K562 (cell line): ENCODE measurements at regions of chr7 and their contacts with region 1.

Region 1: GRCh38 chr7:115889354-115889984 is 141.1 kb downstream of the TFEC start:
- DNase-seq: no peak
- ATAC-seq: no peak
- H3K4me3 ChIP-seq: no peak overlapping the region
- H3K27ac ChIP-seq: no peak overlapping the region
- H3K4me1 ChIP-seq: no peaks in the 10 kb centered on the region
- H3K27me3 ChIP-seq: no peaks in the 10 kb centered on the region
- CTCF ChIP-seq: no peak
- EP300 ChIP-seq: no peak
- POLR2A ChIP-seq: no peak
- RAD21 ChIP-seq: no peak

Region 2: DNA sequence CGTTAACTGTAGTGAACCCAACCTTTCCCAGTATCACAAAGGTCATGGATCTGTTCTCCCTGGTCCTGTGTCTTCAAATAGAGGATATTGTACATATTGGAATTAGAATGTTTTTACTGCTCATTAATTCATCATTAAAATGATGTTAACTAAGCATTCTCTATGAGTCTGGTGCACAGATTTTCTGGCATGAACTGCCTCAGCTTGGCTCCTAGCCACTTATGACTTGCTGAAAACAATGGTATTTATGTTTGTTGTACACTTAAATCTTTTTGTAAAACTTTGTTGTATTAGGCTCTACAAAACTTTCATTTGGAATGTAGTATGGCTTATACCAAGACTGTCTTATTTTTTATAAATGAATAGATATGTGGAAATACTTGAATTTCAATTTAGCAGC is 188.3 kb before region 1 on chr7:
- CTCF ChIA-PET with region 1: no interaction called
- POLR2A ChIA-PET with region 1: no interaction called
- in situ Hi-C with region 1: no loop called
- intact Hi-C with region 1: no loop called
- DNase-seq: no peak
- ATAC-seq: no peak
- H3K4me3 ChIP-seq: no peak overlapping the region
- H3K27ac ChIP-seq: no peak overlapping the region
- H3K4me1 ChIP-seq: no peaks in the 10 kb centered on the region
- H3K27me3 ChIP-seq: no peaks in the 10 kb centered on the region
- CTCF ChIP-seq: no peak
- EP300 ChIP-seq: no peak
- POLR2A ChIP-seq: no peak
- RAD21 ChIP-seq: no peak

Region 3: GRCh38 chr7:115869225-115869624 is 20.2 kb before region 1 on chr7:
- CTCF ChIA-PET with region 1: no interaction called
- POLR2A ChIA-PET with region 1: no interaction called
- in situ Hi-C with region 1: no loop called
- intact Hi-C with region 1: no loop called
- DNase-seq: no peak
- ATAC-seq: no peak
- H3K4me3 ChIP-seq: no peak overlapping the region
- H3K27ac ChIP-seq: no peak overlapping the region
- H3K4me1 ChIP-seq: no peaks in the 10 kb centered on the region
- H3K27me3 ChIP-seq: no peaks in the 10 kb centered on the region
- CTCF ChIP-seq: no peak
- EP300 ChIP-seq: no peak
- POLR2A ChIP-seq: no peak
- RAD21 ChIP-seq: no peak

Region 4: DNA sequence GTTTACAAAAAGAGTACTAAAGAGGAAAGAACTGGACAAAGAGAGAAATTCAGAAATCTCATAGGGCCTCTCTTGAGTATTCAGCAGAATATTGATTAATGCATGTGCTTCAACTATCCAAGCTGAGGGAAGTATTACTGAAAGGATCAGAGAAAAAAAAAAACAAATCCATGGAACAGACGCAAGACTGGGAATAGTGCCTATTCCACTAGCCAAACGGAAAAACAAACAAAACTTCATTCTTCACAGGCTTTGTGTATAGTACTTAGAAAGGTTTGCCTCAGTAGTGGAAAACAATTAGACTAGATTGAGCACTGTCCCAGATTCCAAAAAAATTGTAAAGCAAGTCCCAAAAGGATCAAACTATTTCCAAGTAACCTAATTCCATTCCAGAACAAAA is 34.9 kb after region 1 on chr7:
- CTCF ChIA-PET with region 1: no interaction called
- POLR2A ChIA-PET with region 1: no interaction called
- in situ Hi-C with region 1: no loop called
- intact Hi-C with region 1: no loop called
- DNase-seq: no peak
- ATAC-seq: no peak
- H3K4me3 ChIP-seq: no peak overlapping the region
- H3K27ac ChIP-seq: no peak overlapping the region
- H3K4me1 ChIP-seq: no peaks in the 10 kb centered on the region
- H3K27me3 ChIP-seq: no peaks in the 10 kb centered on the region
- CTCF ChIP-seq: no peak
- EP300 ChIP-seq: no peak
- POLR2A ChIP-seq: no peak
- RAD21 ChIP-seq: no peak

Region 5: GRCh38 chr7:115952832-115953231 is 63.4 kb after region 1 on chr7:
- CTCF ChIA-PET with region 1: no interaction called
- POLR2A ChIA-PET with region 1: no interaction called
- in situ Hi-C with region 1: no loop called
- intact Hi-C with region 1: no loop called
- DNase-seq: no peak
- ATAC-seq: no peak
- H3K4me3 ChIP-seq: no peak overlapping the region
- H3K27ac ChIP-seq: no peak overlapping the region
- H3K4me1 ChIP-seq: no peaks in the 10 kb centered on the region
- H3K27me3 ChIP-seq: no peaks in the 10 kb centered on the region
- CTCF ChIP-seq: no peak
- EP300 ChIP-seq: no peak
- POLR2A ChIP-seq: no peak
- RAD21 ChIP-seq: no peak

Region 6: DNA sequence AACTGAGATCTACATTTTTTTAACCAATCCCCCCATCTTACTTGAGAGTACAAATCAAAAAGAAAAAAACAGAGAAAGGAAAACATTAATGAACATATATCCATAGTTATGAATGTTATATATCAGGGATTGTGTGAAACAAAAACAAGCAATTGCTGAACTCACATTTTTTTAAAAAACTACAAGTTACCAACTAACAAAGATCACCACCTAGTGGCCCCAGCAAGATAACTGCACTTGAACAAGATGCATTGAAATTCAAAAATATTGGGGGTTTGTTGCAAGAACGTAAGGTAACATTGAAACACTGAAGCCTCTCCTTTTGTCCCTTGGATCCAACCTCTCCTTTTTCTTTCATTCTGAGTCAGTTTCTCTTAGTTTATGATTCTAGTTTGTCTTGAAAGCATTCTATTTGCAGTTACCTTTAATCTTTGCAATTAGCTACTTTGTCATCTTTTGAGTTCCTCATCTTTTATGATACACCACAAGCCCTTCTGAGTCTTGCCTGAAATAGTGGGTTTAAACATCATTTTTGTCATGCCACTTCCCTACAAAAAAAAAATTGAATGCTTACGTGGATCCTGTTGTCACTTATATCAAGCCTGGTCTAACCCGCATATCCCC is 233.6 kb after region 1 on chr7:
- CTCF ChIA-PET with region 1: no interaction called
- POLR2A ChIA-PET with region 1: no interaction called
- in situ Hi-C with region 1: no loop called
- intact Hi-C with region 1: loop called (anchors 10 kb)
- DNase-seq: peak in 3 of 4 experiments; percentile 20 to 40 (median 21)
- ATAC-seq: 0 out of 3 replicates have a peak, but pooled peaks have one; percentile 41
- H3K4me3 ChIP-seq: no peak overlapping the region
- H3K27ac ChIP-seq: no peak overlapping the region
- H3K4me1 ChIP-seq: no peaks in the 10 kb centered on the region
- H3K27me3 ChIP-seq: no peaks in the 10 kb centered on the region
- CTCF ChIP-seq: peak; percentile 25 to 68 (median 62); a peak in 5 of 6 replicates
- EP300 ChIP-seq: no peak
- POLR2A ChIP-seq: no peak
- RAD21 ChIP-seq: peak; percentile 86 to 88